Activated CD8-positive, alpha-beta T cell treated with anti-CD3 and anti-CD28 coated beads for 36 hours (primary cell): ENCODE measurements at regions of chr5 and their contacts with region 1.

Region 1: DNA sequence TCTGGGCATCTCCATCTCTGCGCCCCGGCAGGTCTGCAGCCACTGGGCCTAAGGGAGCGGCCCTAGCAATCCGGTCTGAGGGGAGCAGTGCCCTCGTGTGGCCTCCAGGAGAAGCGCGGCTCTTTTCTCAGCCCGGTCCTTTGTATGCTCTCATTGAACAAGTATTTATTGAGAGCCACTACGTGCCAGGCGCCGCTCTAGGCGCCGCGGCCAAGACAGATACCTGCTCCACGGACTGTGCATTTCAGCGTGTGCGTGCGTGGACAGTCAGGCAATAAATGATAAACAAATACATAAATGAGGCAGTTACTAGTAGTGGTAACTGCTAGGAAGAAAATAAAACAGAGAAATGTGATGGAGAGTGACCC is 2.3 kb upstream of the SLC4A9 start:
- DNase-seq: peak; percentile 88
- ATAC-seq: peak; percentile 99
- H3K4me3 Mint-ChIP-seq: peak overlapping the region; percentile 49
- H3K27ac Mint-ChIP-seq: peak overlapping the region; percentile 31
- H3K4me1 Mint-ChIP-seq: peaks cover 13% of the 10 kb centered on the region
- H3K27me3 Mint-ChIP-seq: peaks cover 9% of the 10 kb centered on the region
- CTCF ChIP-seq: peak; percentile 73

Region 2: DNA sequence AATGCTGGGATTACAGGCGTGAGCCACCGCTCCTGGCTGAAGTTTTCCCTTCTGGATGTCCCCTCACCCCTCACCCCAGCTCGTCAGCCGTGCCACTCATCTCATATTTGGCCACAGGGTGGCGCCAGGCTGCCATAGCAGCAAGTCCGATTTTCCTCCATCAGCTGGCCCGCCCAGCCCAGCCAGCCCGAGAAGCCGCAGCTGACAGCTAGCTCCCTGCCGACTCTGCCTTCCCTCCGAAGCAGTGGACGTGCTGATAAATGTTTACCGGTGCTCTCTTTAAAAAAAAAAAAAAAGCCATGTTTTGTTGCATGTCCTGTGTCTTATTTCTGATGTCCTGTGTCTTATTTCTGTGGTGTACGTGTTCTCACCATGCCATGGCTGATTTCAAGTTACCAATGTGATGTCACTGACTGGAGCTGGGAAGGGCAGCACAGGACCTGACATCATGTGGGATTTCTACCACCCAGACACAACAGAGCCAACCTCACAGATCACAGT is 113.1 kb before region 1 on chr5:
- CTCF ChIA-PET with region 1: interaction called, 874 read pairs
- POLR2A ChIA-PET with region 1: interaction called, 5 read pairs
- intact Hi-C with region 1: loop called (anchors 1 kb)
- DNase-seq: peak; percentile 91
- ATAC-seq: peak; percentile 77
- H3K4me3 Mint-ChIP-seq: no peak overlapping the region
- H3K27ac Mint-ChIP-seq: no peak overlapping the region
- H3K4me1 Mint-ChIP-seq: peaks cover 10% of the 10 kb centered on the region
- H3K27me3 Mint-ChIP-seq: no peaks in the 10 kb centered on the region
- CTCF ChIP-seq: peak; percentile 91

Region 3: GRCh38 chr5:140346348-140347101 is 11.2 kb before region 1 on chr5 and contains the start of gene HBEGF:
- CTCF ChIA-PET with region 1: interaction called, 58 read pairs
- POLR2A ChIA-PET with region 1: interaction called, 3 read pairs
- intact Hi-C with region 1: no loop called
- DNase-seq: peak; percentile 65
- ATAC-seq: peak; percentile 48
- H3K4me3 Mint-ChIP-seq: peak within 1 kb of the TSS; percentile 73
- H3K27ac Mint-ChIP-seq: peak within 1 kb of the TSS; percentile 44
- H3K4me1 Mint-ChIP-seq: peaks cover 36% of the 10 kb centered on the region
- H3K27me3 Mint-ChIP-seq: peaks cover 10% of the 10 kb centered on the region
- CTCF ChIP-seq: peak; percentile 52
- total RNA-seq, gene HBEGF: 5.1 to 6.4 TPM

Region 4: DNA sequence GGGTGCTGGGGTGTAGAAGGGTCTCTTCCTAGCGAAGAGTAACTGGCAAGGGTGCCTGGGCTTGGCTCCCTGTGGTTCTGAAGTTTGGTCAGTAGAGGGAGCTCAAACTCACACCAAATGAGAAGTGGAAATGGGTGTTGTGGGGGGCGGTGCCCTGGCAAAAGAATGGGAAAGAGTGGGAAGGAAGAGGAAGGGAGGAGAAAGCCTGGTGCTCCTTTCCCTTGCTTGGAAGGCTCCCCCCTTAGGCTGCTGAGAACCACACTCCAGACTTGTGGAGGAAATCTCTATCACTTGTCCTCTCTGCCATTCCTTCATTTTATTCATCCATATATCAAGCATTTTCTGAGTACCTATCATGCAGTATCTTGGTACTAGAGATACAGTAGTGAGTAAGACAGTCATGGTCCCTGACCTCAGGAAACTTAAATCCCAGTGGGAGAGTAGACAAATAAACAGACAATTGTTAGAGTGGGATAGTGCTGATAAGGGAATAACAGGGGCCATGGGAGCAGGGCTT is 15.3 kb after region 1 on chr5:
- CTCF ChIA-PET with region 1: interaction called, 43 read pairs
- POLR2A ChIA-PET with region 1: no interaction called
- intact Hi-C with region 1: no loop called
- DNase-seq: peak; percentile 57
- ATAC-seq: peak; percentile 86
- H3K4me3 Mint-ChIP-seq: no peak overlapping the region
- H3K27ac Mint-ChIP-seq: no peak overlapping the region
- H3K4me1 Mint-ChIP-seq: no peaks in the 10 kb centered on the region
- H3K27me3 Mint-ChIP-seq: no peaks in the 10 kb centered on the region
- CTCF ChIP-seq: peak; percentile 87

Region 5: DNA sequence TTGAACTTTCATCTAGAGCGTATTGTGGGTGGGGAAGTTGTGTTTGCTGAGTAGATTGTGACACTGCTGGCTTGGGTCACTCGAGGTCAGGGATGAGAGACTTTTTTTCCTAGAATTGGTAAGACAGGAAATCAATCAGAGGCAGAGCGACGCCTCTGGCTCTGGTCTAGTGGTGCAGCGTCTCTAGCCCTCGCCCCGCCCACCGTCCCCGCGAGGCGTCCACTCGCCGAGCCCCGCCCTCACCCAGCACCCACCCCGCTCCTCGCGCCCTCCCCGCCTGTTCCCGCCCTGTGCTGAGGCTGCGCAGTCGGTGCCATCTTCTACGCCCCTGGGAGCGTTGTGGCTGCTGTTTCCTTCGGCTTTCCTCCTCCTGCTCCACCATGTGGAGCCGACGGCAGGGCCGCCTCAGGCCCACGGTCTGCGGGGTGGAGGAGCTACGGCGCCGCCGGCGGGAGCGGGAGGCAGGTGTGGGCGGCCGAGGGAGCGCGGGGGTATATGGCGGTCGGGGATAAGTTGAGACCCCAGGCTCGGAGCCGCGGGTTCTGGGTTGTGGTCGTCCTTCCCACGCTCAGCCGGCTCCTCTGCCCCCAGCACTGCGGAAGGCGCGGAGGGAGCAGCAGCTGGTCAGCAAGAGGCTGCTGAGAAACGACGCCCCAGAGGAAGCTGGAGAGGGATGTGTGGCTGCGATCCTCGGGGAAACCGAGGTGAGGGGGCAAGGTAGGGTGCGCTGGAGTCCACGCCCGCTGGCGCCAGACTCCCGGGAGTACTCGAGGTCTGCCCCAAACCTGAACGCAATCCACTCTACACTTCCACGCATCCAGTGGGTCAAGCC is 281.7 kb after region 1 on chr5 and contains the start of gene TMCO6:
- CTCF ChIA-PET with region 1: interaction called, 8 read pairs
- POLR2A ChIA-PET with region 1: no interaction called
- intact Hi-C with region 1: loop called (anchors 5 kb)
- DNase-seq: peak; percentile 98
- ATAC-seq: peak; percentile 97
- H3K4me3 Mint-ChIP-seq: peak within 1 kb of the TSS; percentile 78
- H3K27ac Mint-ChIP-seq: peak within 1 kb of the TSS; percentile 86
- H3K4me1 Mint-ChIP-seq: peaks cover 42% of the 10 kb centered on the region
- H3K27me3 Mint-ChIP-seq: no peaks in the 10 kb centered on the region
- CTCF ChIP-seq: peak; percentile 72
- total RNA-seq, gene TMCO6: 31.7 to 33.2 TPM